B cell (primary cell): ENCODE measurements at regions of chr1 and their contacts with region 1.

Region 1: GRCh38 chr1:225777583-225778336 is at the start of gene SRP9:
- DNase-seq: peak; percentile 99
- ATAC-seq: peak; percentile 97
- H3K4me3 ChIP-seq: peak within 1 kb of the TSS; percentile 71 to 97 (median 92)
- H3K4me3 Mint-ChIP-seq: no peak within 1 kb of the TSS
- H3K27ac ChIP-seq: peak within 1 kb of the TSS; percentile 96 to 98
- H3K27ac Mint-ChIP-seq: no peak within 1 kb of the TSS
- H3K4me1 ChIP-seq: peaks cover 33 to 39% of the 10 kb centered on the region in 2 donors
- H3K4me1 Mint-ChIP-seq: peaks cover 21% of the 10 kb centered on the region
- H3K27me3 ChIP-seq: no peaks in the 10 kb centered on the region
- H3K27me3 Mint-ChIP-seq: no peaks in the 10 kb centered on the region
- CTCF ChIP-seq: peak; percentile 89
- total RNA-seq, gene SRP9: 104 and 117 TPM in 2 replicates

Region 2: GRCh38 chr1:225467193-225468020 is 310.4 kb before region 1 on chr1:
- CTCF ChIA-PET with region 1: interaction called, 7 read pairs
- POLR2A ChIA-PET with region 1: interaction called, 4 read pairs
- intact Hi-C with region 1: loop called (anchors 2 kb)
- DNase-seq: peak; percentile 92
- ATAC-seq: peak; percentile 88
- H3K4me3 ChIP-seq: peak overlapping the region; percentile 68 to 83 (median 73)
- H3K4me3 Mint-ChIP-seq: peak overlapping the region; percentile 91
- H3K27ac ChIP-seq: peak overlapping the region; percentile 82 to 97
- H3K27ac Mint-ChIP-seq: peak overlapping the region; percentile 97
- H3K4me1 ChIP-seq: peaks cover 15 to 34% of the 10 kb centered on the region in 2 donors
- H3K4me1 Mint-ChIP-seq: peaks cover 37% of the 10 kb centered on the region
- H3K27me3 ChIP-seq: no peaks in the 10 kb centered on the region
- H3K27me3 Mint-ChIP-seq: no peaks in the 10 kb centered on the region
- CTCF ChIP-seq: no peak

Region 3: DNA sequence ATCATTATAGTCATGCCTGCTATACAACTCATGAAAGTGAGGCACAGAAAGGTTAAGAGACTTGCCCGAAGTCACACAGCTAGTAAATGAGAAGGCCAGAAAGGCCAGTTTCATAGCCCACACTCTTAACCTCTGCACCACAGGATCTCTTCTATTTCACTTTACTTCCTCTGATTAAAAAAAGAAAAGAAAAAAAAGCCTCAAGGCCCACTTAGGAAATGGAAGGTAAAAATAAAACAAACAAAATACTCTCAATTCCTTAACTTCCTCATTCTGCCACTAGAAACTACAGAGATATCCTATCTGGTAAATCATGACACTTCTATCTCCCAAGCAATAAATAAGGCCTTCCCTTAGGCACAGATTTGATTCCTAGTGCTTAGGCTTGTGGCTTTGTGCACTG is 117.2 kb before region 1 on chr1:
- CTCF ChIA-PET with region 1: interaction called, 5 read pairs
- POLR2A ChIA-PET with region 1: no interaction called
- intact Hi-C with region 1: loop called (anchors 5 kb)
- DNase-seq: peak; percentile 45
- ATAC-seq: peak; percentile 54
- H3K4me3 ChIP-seq: peak overlapping the region in 1 of 5 experiments; percentile 40
- H3K4me3 Mint-ChIP-seq: peak overlapping the region; percentile 44
- H3K27ac ChIP-seq: peak overlapping the region; percentile 20 to 48
- H3K27ac Mint-ChIP-seq: peak overlapping the region; percentile 7
- H3K4me1 ChIP-seq: peaks cover 23 to 29% of the 10 kb centered on the region in 2 donors
- H3K4me1 Mint-ChIP-seq: peaks cover 32% of the 10 kb centered on the region
- H3K27me3 ChIP-seq: no peaks in the 10 kb centered on the region
- H3K27me3 Mint-ChIP-seq: no peaks in the 10 kb centered on the region
- CTCF ChIP-seq: no peak

Region 4: DNA sequence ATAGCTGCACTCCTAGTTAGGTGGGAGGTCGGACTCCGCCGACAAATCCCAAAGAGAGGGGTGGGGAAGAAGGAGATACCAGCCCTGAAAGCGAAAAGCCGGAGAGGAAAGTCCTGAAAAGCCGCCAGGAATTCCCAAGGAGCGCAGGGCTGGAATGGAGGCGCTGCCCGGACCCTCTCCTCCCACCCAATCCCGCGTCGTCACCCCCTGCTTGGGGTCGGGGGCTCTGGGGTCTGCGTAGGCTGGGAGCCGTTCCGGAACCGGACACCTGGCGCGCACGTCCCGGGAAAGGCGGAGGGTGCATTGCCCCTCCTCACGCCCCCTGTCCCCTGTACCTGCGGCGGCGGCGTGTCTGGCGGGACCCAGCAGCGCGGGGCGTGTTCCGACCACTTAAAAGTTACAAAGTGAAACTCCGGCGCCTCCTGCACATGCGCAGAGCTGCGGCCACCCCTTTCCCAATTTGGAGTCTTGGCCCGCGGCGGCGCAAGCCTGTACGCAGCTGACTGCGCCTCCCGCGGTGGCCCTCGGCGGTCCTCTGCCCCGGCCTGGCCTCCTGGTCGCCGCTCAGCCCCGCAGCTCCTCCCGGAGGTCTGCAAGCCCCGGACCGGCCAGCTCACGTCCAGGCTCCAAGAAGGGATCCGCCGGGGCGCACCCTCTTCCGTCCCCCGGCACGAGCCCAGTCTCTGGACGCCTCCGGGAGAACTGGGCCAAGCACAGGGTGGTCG is 104.4 kb after region 1 on chr1 and contains the start of gene TMEM63A:
- CTCF ChIA-PET with region 1: interaction called, 32 read pairs
- POLR2A ChIA-PET with region 1: interaction called, 22 read pairs
- intact Hi-C with region 1: loop called (anchors 1 kb)
- DNase-seq: peak; percentile 91
- ATAC-seq: peak; percentile 78
- H3K4me3 ChIP-seq: peak within 1 kb of the TSS; percentile 86 to 99 (median 96)
- H3K4me3 Mint-ChIP-seq: peak within 1 kb of the TSS; percentile 96
- H3K27ac ChIP-seq: peak within 1 kb of the TSS; percentile 51 to 74
- H3K27ac Mint-ChIP-seq: peak within 1 kb of the TSS; percentile 91
- H3K4me1 ChIP-seq: peaks cover 30 to 42% of the 10 kb centered on the region in 2 donors
- H3K4me1 Mint-ChIP-seq: peaks cover 48% of the 10 kb centered on the region
- H3K27me3 ChIP-seq: no peaks in the 10 kb centered on the region
- H3K27me3 Mint-ChIP-seq: no peaks in the 10 kb centered on the region
- CTCF ChIP-seq: peak; percentile 23
- total RNA-seq, gene TMEM63A: 238 and 267 TPM in 2 replicates

Region 5: GRCh38 chr1:225923692-225924555 is 146.2 kb after region 1 on chr1 and contains the start of gene PYCR2:
- CTCF ChIA-PET with region 1: interaction called, 15 read pairs
- POLR2A ChIA-PET with region 1: interaction called, 10 read pairs
- intact Hi-C with region 1: loop called (anchors 1 kb)
- DNase-seq: peak; percentile 97
- ATAC-seq: peak; percentile 99
- H3K4me3 ChIP-seq: peak within 1 kb of the TSS; percentile 72 to 99 (median 86)
- H3K4me3 Mint-ChIP-seq: peak within 1 kb of the TSS; percentile 97
- H3K27ac ChIP-seq: peak within 1 kb of the TSS; percentile 81 to 91
- H3K27ac Mint-ChIP-seq: peak within 1 kb of the TSS; percentile 92
- H3K4me1 ChIP-seq: peaks cover 16 to 26% of the 10 kb centered on the region in 2 donors
- H3K4me1 Mint-ChIP-seq: peaks cover 21% of the 10 kb centered on the region
- H3K27me3 ChIP-seq: no peaks in the 10 kb centered on the region
- H3K27me3 Mint-ChIP-seq: no peaks in the 10 kb centered on the region
- CTCF ChIP-seq: no peak
- total RNA-seq, gene PYCR2: 107 and 113 TPM in 2 replicates

Region 6: GRCh38 chr1:225999227-225999911 is 221.6 kb after region 1 on chr1 and contains the start of gene SDE2:
- CTCF ChIA-PET with region 1: no interaction called
- POLR2A ChIA-PET with region 1: no interaction called
- intact Hi-C with region 1: loop called (anchors 1 kb)
- DNase-seq: peak; percentile 100
- ATAC-seq: peak; percentile 81
- H3K4me3 ChIP-seq: peak within 1 kb of the TSS; percentile 75 to 93 (median 88)
- H3K4me3 Mint-ChIP-seq: peak within 1 kb of the TSS; percentile 100
- H3K27ac ChIP-seq: peak within 1 kb of the TSS; percentile 100
- H3K27ac Mint-ChIP-seq: peak within 1 kb of the TSS; percentile 97
- H3K4me1 ChIP-seq: peaks cover 65 to 72% of the 10 kb centered on the region in 2 donors
- H3K4me1 Mint-ChIP-seq: peaks cover 74% of the 10 kb centered on the region
- H3K27me3 ChIP-seq: no peaks in the 10 kb centered on the region
- H3K27me3 Mint-ChIP-seq: no peaks in the 10 kb centered on the region
- CTCF ChIP-seq: no peak
- total RNA-seq, gene SDE2: 26.0 and 26.3 TPM in 2 replicates